Panc1 (cell line): ENCODE measurements at regions of chr10 and their contacts with region 1.

Region 1: GRCh38 chr10:71158902-71159301 is 53.5 kb upstream of the UNC5B start:
- DNase-seq: no peak
- ATAC-seq: no peak
- H3K4me3 ChIP-seq: no peak overlapping the region
- H3K27ac ChIP-seq: no peak overlapping the region
- H3K4me1 ChIP-seq: no peaks in the 10 kb centered on the region
- H3K27me3 ChIP-seq: peaks cover 7% of the 10 kb centered on the region; the same call in 1 of the 2 replicates
- CTCF ChIP-seq: no peak

Region 2: GRCh38 chr10:71176661-71177060 is 17.8 kb after region 1 on chr10:
- CTCF ChIA-PET with region 1: interaction called, 11 read pairs
- POLR2A ChIA-PET with region 1: interaction called, 3 read pairs
- in situ Hi-C with region 1: no loop called
- intact Hi-C with region 1: no loop called
- DNase-seq: no peak
- ATAC-seq: no peak
- H3K4me3 ChIP-seq: no peak overlapping the region
- H3K27ac ChIP-seq: no peak overlapping the region
- H3K4me1 ChIP-seq: no peaks in the 10 kb centered on the region
- H3K27me3 ChIP-seq: peaks cover 27% of the 10 kb centered on the region
- CTCF ChIP-seq: no peak

Region 3: GRCh38 chr10:71234970-71235685 is 76.2 kb after region 1 on chr10:
- CTCF ChIA-PET with region 1: no interaction called
- POLR2A ChIA-PET with region 1: no interaction called
- in situ Hi-C with region 1: no loop called
- intact Hi-C with region 1: no loop called
- DNase-seq: no peak
- ATAC-seq: no peak
- H3K4me3 ChIP-seq: no peak overlapping the region
- H3K27ac ChIP-seq: no peak overlapping the region
- H3K4me1 ChIP-seq: no peaks in the 10 kb centered on the region
- H3K27me3 ChIP-seq: no peaks in the 10 kb centered on the region
- CTCF ChIP-seq: no peak

Region 4: DNA sequence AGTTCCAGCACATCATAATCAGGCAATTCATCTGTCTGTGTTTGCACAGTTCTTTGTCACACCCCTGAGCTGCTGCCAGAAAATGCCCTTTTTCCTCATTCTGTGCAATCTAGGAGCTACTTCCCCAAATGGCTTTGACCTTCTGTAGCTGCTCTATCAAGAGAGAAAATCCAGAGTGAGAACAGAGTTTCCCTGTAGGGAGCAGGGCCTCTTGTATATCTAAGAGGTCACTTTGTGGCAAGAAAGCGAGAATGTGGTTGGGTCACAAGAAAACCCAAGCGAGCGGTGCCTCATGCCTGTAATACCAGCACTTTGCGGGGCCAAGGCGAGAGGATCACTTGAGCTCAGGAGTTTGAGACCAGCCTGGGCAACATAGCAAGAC is 184.5 kb after region 1 on chr10:
- CTCF ChIA-PET with region 1: no interaction called
- POLR2A ChIA-PET with region 1: no interaction called
- in situ Hi-C with region 1: no loop called
- intact Hi-C with region 1: no loop called
- DNase-seq: no peak
- ATAC-seq: no peak
- H3K4me3 ChIP-seq: no peak overlapping the region
- H3K27ac ChIP-seq: no peak overlapping the region
- H3K4me1 ChIP-seq: peaks cover 23% of the 10 kb centered on the region
- H3K27me3 ChIP-seq: no peaks in the 10 kb centered on the region
- CTCF ChIP-seq: no peak